B cell (primary cell): ENCODE measurements at regions of chr6 and their contacts with region 1.

Region 1: GRCh38 chr6:113632220-113632864 is 224.8 kb upstream of the MARCKS start:
- DNase-seq: peak; percentile 52
- ATAC-seq: peak; percentile 16
- H3K4me3 ChIP-seq: peak overlapping the region in 2 of 5 experiments; percentile 7 to 42
- H3K4me3 Mint-ChIP-seq: peak overlapping the region; percentile 82
- H3K27ac ChIP-seq: peak overlapping the region; percentile 98 to 100
- H3K27ac Mint-ChIP-seq: peak overlapping the region; percentile 93
- H3K4me1 ChIP-seq: peaks cover 87 to 88% of the 10 kb centered on the region in 2 donors
- H3K4me1 Mint-ChIP-seq: peaks cover 77% of the 10 kb centered on the region
- H3K27me3 ChIP-seq: no peaks in the 10 kb centered on the region
- H3K27me3 Mint-ChIP-seq: no peaks in the 10 kb centered on the region
- CTCF ChIP-seq: no peak

Region 2: DNA sequence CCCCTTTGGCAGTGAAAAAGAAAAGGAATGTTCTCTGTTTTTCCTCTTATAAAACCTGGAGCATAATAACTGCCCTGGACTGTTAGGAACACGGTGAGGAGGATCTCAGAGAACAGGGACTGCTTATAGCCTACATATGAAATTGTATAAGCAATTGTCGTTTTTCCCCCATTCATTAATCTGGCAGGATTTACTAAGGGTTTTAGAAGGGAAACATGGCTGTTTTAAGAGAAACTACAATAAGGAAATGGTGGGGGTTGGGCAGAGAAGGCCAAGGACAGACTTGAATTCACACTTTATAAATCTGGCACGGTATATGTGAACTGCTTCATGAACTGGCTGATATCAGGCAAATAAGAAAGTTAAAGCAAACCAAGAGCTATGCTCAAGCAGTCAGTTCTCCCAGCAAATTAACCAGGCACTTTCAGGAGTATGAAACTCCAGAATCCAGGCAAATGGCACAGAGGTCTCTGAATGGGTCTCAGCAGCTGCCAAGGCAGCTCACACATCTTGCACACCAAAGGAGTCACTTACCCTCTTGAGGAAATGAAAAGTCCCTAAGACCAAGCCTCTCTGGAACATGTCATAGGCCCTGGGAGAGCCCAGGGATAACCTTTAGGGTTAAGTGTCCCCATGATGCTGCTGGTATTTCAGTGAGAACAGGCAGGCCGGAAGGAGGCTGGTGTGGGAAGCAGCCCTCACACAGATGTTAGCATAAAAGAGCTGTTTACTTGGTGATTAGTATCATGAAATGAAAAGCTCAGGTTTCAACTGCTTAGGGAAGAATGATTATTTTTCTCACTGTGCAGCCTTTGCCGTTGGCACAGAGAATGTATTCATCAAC is 35.7 kb before region 1 on chr6:
- CTCF ChIA-PET with region 1: no interaction called
- POLR2A ChIA-PET with region 1: no interaction called
- intact Hi-C with region 1: loop called (anchors 5 kb)
- DNase-seq: no peak
- ATAC-seq: no peak
- H3K4me3 ChIP-seq: no peak overlapping the region
- H3K4me3 Mint-ChIP-seq: no peak overlapping the region
- H3K27ac ChIP-seq: no peak overlapping the region
- H3K27ac Mint-ChIP-seq: no peak overlapping the region
- H3K4me1 ChIP-seq: peaks cover 4 to 5% of the 10 kb centered on the region in 2 donors
- H3K4me1 Mint-ChIP-seq: peaks cover 30% of the 10 kb centered on the region
- H3K27me3 ChIP-seq: no peaks in the 10 kb centered on the region
- H3K27me3 Mint-ChIP-seq: no peaks in the 10 kb centered on the region
- CTCF ChIP-seq: no peak

Region 3: GRCh38 chr6:113642714-113643406 is 10.5 kb after region 1 on chr6:
- CTCF ChIA-PET with region 1: interaction called, 5 read pairs
- POLR2A ChIA-PET with region 1: interaction called, 4 read pairs
- intact Hi-C with region 1: loop called (anchors 1 kb)
- DNase-seq: peak; percentile 50
- ATAC-seq: peak; percentile 71
- H3K4me3 ChIP-seq: no peak overlapping the region
- H3K4me3 Mint-ChIP-seq: peak overlapping the region; percentile 48
- H3K27ac ChIP-seq: peak overlapping the region in 1 of 2 donors; percentile 47
- H3K27ac Mint-ChIP-seq: peak overlapping the region; percentile 46
- H3K4me1 ChIP-seq: peaks cover 26 to 27% of the 10 kb centered on the region in 2 donors
- H3K4me1 Mint-ChIP-seq: peaks cover 46% of the 10 kb centered on the region
- H3K27me3 ChIP-seq: no peaks in the 10 kb centered on the region
- H3K27me3 Mint-ChIP-seq: no peaks in the 10 kb centered on the region
- CTCF ChIP-seq: no peak

Region 4: DNA sequence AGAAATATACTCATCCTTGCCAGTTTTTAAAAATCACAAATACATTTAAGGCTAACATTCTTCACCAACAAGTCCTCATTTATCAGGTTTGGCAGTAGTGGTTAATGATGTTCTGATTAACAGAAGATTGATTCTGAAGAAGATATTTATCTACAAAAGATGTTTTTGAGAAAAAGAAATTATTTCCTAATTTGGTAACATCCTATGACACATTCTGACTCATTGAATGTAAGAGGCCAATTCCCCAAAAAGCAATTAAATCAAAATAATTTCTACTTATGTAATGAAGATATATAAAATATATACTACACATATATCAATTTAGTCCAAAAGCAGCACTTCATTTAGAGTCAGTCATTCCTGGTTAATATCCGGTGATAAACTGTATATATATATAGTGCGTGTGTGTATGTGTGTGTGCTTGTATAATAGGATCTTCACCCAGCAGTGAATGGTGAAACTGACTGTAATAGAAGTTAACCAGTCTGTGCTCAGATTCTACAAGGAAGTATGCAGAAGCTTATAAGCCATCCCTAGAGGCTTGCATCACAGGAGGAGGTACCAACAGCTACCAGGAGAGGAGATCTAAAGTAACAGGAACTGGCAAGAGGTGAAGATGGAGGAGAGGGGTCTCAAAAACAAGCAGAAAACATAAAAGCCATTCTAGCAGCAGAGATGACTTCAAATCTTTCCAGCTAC is 141.9 kb after region 1 on chr6:
- CTCF ChIA-PET with region 1: no interaction called
- POLR2A ChIA-PET with region 1: interaction called, 10 read pairs
- intact Hi-C with region 1: no loop called
- DNase-seq: no peak
- ATAC-seq: peak; percentile 33
- H3K4me3 ChIP-seq: no peak overlapping the region
- H3K4me3 Mint-ChIP-seq: no peak overlapping the region
- H3K27ac ChIP-seq: no peak overlapping the region
- H3K27ac Mint-ChIP-seq: no peak overlapping the region
- H3K4me1 ChIP-seq: no peaks in the 10 kb centered on the region
- H3K4me1 Mint-ChIP-seq: peaks cover 6% of the 10 kb centered on the region
- H3K27me3 ChIP-seq: no peaks in the 10 kb centered on the region
- H3K27me3 Mint-ChIP-seq: no peaks in the 10 kb centered on the region
- CTCF ChIP-seq: no peak

Region 5: GRCh38 chr6:113805173-113805790 is 172.9 kb after region 1 on chr6:
- CTCF ChIA-PET with region 1: interaction called, 3 read pairs
- POLR2A ChIA-PET with region 1: interaction called, 9 read pairs
- intact Hi-C with region 1: loop called (anchors 2 kb)
- DNase-seq: peak; percentile 63
- ATAC-seq: peak; percentile 38
- H3K4me3 ChIP-seq: peak overlapping the region in 2 of 5 experiments; percentile 13 to 45
- H3K4me3 Mint-ChIP-seq: peak overlapping the region; percentile 64
- H3K27ac ChIP-seq: peak overlapping the region; percentile 46 to 50
- H3K27ac Mint-ChIP-seq: peak overlapping the region; percentile 81
- H3K4me1 ChIP-seq: peaks cover 41 to 47% of the 10 kb centered on the region in 2 donors
- H3K4me1 Mint-ChIP-seq: peaks cover 51% of the 10 kb centered on the region
- H3K27me3 ChIP-seq: no peaks in the 10 kb centered on the region
- H3K27me3 Mint-ChIP-seq: no peaks in the 10 kb centered on the region
- CTCF ChIP-seq: no peak